Naive thymus-derived CD4-positive, alpha-beta T cell (primary cell): ENCODE measurements at regions of chr7 and their contacts with region 1.

Region 1: DNA sequence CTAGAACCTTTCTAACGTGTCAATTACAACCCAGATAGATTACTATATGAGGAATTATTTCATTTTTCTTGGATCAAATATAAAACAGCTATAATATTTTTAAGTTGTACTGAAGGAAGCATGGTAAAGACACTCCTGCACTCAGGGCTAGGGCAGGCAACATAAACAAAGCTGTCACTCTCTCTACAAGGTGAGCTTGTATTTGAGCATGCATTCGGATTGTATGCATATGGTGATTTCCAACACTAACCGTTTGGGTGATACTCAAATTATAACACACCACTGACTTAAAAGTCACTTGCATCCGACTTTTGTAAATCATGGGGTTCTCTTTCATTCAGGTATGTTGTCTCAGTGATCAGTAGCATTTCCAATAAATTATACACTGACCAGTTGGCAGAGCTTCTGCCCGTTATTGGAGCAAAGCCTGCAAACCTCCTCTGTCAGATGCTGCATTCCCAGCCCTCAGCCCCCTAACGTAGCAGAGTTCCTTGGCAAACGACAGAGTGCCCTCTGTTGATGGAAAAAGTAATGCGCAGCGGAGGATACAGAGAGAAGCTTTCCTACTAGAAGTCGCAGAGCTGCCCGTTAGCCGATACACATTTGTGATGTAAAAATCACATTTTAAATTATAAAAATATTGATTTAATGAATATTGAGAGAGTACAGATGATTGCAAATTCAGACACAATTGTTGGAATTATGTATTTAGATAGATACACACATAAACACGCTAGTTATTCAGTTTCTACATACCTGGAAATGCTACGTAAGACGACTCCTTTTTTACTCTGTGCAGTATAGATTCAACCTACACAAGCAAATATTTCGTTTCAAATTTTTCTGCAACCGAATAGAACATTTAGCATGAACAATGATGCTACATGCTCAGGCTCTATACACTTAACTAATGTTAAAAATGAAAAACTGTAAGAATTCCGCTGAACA is 173.9 kb upstream of the SP4 start:
- DNase-seq: peak in 8 of 9 donors; percentile 3 to 49 (median 24)
- ATAC-seq: peak; percentile 71
- H3K4me3 ChIP-seq: no peak overlapping the region
- H3K4me3 Mint-ChIP-seq: peak overlapping the region in 8 of 10 donors; percentile 39 to 66 (median 55)
- H3K27ac ChIP-seq: no peak overlapping the region
- H3K27ac Mint-ChIP-seq: no peak overlapping the region
- H3K4me1 ChIP-seq: no peaks in the 10 kb centered on the region
- H3K4me1 Mint-ChIP-seq: peaks cover 0 to 21% (median 0%) of the 10 kb centered on the region in 7 donors
- H3K27me3 ChIP-seq: peaks cover 4 to 18% of the 10 kb centered on the region in 2 donors
- H3K27me3 Mint-ChIP-seq: peaks cover 62 to 77% (median 68%) of the 10 kb centered on the region in 5 donors

Region 2: DNA sequence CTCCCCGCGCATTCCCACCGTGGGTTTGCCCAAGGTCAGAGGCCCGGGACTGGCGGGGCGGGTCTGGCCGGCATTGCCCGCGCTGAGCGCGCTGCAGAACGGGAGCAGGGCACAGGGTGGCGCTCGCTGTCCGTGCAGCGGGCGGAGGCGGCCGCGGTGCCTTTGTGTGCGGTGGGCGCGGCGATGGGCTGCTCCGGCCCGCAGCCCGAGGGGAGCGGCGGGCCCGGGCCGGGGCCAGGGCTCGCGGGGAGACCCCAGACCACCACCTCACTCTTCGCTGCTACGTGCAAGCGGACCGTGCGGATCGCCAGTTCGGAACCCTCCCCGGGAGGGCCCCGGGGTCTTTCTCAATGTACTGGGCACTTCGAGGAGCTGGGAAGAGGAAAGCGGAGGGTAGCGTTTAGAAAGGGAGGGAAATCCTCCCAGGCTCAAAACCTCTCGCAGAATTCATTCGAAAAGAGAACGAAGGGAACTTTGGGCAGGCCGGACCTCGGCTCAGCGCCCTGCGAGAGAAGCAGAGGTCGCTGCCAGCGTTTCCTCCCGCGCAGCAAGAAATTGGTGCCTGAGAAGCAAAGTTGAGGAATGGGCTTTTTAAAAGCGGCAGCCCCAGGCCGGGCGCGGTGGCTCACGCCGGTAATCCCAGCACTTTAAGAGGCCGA is 475.8 kb before region 1 on chr7:
- CTCF ChIA-PET with region 1: no interaction called
- POLR2A ChIA-PET with region 1: no interaction called
- intact Hi-C with region 1: loop called in 1 of 2 experiments (anchors 5 kb)
- DNase-seq: no peak
- ATAC-seq: peak; percentile 53
- H3K4me3 ChIP-seq: no peak overlapping the region
- H3K4me3 Mint-ChIP-seq: peak overlapping the region in 5 of 10 donors; percentile 9 to 91 (median 14)
- H3K27ac ChIP-seq: no peak overlapping the region
- H3K27ac Mint-ChIP-seq: peak overlapping the region in 1 of 9 donors; percentile 11
- H3K4me1 ChIP-seq: no peaks in the 10 kb centered on the region
- H3K4me1 Mint-ChIP-seq: peaks cover 8 to 18% (median 14%) of the 10 kb centered on the region in 7 donors
- H3K27me3 ChIP-seq: peaks cover 4 to 16% of the 10 kb centered on the region in 2 donors
- H3K27me3 Mint-ChIP-seq: peaks cover 79 to 89% (median 87%) of the 10 kb centered on the region in 5 donors

Region 3: GRCh38 chr7:21146642-21147433 is 107.2 kb before region 1 on chr7:
- CTCF ChIA-PET with region 1: no interaction called
- POLR2A ChIA-PET with region 1: no interaction called
- intact Hi-C with region 1: no loop called
- DNase-seq: no peak
- ATAC-seq: no peak
- H3K4me3 ChIP-seq: no peak overlapping the region
- H3K4me3 Mint-ChIP-seq: no peak overlapping the region
- H3K27ac ChIP-seq: no peak overlapping the region
- H3K27ac Mint-ChIP-seq: no peak overlapping the region
- H3K4me1 ChIP-seq: no peaks in the 10 kb centered on the region
- H3K4me1 Mint-ChIP-seq: peaks cover 0 to 1% (median 0%) of the 10 kb centered on the region in 7 donors
- H3K27me3 ChIP-seq: no peaks in the 10 kb centered on the region
- H3K27me3 Mint-ChIP-seq: peaks cover 0 to 26% (median 14%) of the 10 kb centered on the region in 5 donors

Region 4: DNA sequence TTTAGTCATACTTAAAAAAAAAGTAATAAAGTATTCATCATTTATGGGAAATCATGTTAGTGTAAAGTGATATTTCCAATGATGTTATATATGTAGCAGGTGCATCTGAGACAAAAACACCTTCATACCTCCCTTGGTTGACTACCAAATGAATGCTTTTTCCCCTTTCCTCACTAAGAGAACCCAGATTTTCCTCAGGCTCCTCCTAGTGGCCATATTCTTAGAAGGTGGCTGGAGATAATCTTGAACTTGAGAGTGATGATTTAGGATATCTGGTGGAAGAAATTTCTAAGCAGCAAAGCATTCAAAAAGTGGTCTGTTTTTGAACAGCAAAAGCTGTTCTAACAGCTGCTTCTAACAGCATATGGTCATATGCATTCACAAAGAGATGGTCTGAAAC is 272.0 kb after region 1 on chr7:
- CTCF ChIA-PET with region 1: interaction called, 3 read pairs
- POLR2A ChIA-PET with region 1: no interaction called
- intact Hi-C with region 1: loop called (anchors 1 kb)
- DNase-seq: peak in 2 of 9 donors; percentile 14 to 24
- ATAC-seq: no peak
- H3K4me3 ChIP-seq: no peak overlapping the region
- H3K4me3 Mint-ChIP-seq: no peak overlapping the region
- H3K27ac ChIP-seq: no peak overlapping the region
- H3K27ac Mint-ChIP-seq: no peak overlapping the region
- H3K4me1 ChIP-seq: no peaks in the 10 kb centered on the region
- H3K4me1 Mint-ChIP-seq: peaks cover 0 to 3% (median 0%) of the 10 kb centered on the region in 7 donors
- H3K27me3 ChIP-seq: no peaks in the 10 kb centered on the region
- H3K27me3 Mint-ChIP-seq: peaks cover 0 to 18% (median 0%) of the 10 kb centered on the region in 5 donors

Region 5: GRCh38 chr7:21767300-21767900 is 513.4 kb after region 1 on chr7:
- CTCF ChIA-PET with region 1: interaction called, 3 read pairs
- POLR2A ChIA-PET with region 1: no interaction called
- intact Hi-C with region 1: loop called (anchors 1 to 10 kb)
- DNase-seq: peak in 2 of 9 donors; percentile 0 to 26
- ATAC-seq: no peak
- H3K4me3 ChIP-seq: no peak overlapping the region
- H3K4me3 Mint-ChIP-seq: no peak overlapping the region
- H3K27ac ChIP-seq: no peak overlapping the region
- H3K27ac Mint-ChIP-seq: no peak overlapping the region
- H3K4me1 ChIP-seq: no peaks in the 10 kb centered on the region
- H3K4me1 Mint-ChIP-seq: peaks cover 0 to 14% (median 0%) of the 10 kb centered on the region in 7 donors
- H3K27me3 ChIP-seq: no peaks in the 10 kb centered on the region
- H3K27me3 Mint-ChIP-seq: peaks cover 0 to 15% (median 0%) of the 10 kb centered on the region in 5 donors

Region 6: GRCh38 chr7:22082886-22083703 is 829.1 kb after region 1 on chr7:
- CTCF ChIA-PET with region 1: interaction called, 3 read pairs
- POLR2A ChIA-PET with region 1: no interaction called
- intact Hi-C with region 1: loop called (anchors 1 to 10 kb)
- DNase-seq: peak; percentile 59 to 86 (median 73)
- ATAC-seq: peak; percentile 99
- H3K4me3 ChIP-seq: peak overlapping the region; percentile 54
- H3K4me3 Mint-ChIP-seq: peak overlapping the region; percentile 79 to 90 (median 86)
- H3K27ac ChIP-seq: peak overlapping the region; percentile 57
- H3K27ac Mint-ChIP-seq: peak overlapping the region in 7 of 9 donors; percentile 28 to 80 (median 62)
- H3K4me1 ChIP-seq: peaks cover 5 to 7% of the 10 kb centered on the region in 2 donors
- H3K4me1 Mint-ChIP-seq: peaks cover 6 to 18% (median 13%) of the 10 kb centered on the region in 7 donors
- H3K27me3 ChIP-seq: no peaks in the 10 kb centered on the region
- H3K27me3 Mint-ChIP-seq: peaks cover 17 to 50% (median 21%) of the 10 kb centered on the region in 5 donors